HEK293T (cell line): ENCODE measurements at regions of chr6 and their contacts with region 1.

Region 1: DNA sequence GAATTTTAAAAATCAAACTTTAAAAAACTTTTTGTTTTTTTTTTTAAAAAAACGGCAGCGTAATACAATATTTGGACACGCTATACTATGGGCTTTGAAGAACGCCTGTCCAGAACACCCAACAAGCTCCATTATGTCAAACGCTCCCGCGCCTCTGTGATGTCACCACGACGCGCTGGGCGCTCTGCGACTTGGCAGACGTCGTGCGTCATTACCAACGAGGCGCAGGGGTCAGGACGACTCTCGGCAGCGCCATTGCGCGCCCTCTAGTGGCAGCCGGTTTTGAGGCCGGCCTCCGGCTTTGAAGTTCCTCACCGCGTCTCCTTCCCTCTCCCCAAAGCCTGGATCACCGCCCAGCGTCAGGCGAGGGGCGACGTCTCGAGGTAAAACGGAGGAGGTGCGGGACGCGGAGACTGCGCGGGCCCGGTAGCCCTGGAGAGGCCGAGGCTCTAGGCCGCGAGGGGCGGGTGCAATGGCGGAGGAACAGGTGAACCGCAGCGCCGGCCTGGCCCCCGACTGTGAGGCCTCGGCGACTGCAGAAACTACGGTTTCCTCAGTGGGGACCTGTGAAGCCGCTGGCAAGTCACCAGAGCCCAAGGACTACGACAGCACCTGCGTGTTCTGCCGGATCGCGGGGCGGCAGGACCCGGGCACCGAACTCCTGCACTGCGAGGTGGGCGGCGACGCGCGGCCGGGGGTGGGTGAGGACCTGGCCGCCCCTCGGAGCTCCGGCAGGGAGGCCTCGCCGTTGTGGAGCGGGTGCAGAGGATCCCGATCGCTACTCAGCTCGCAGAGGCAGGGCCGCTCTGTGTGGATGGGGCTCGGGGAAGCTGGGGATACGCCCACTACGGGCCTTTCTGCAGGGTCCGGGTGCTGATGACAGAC is at the start of gene HINT3:
- DNase-seq: peak; percentile 97

Region 2: GRCh38 chr6:125779924-125780539 is 176.7 kb before region 1 on chr6:
- CTCF ChIA-PET with region 1: interaction called, 15 read pairs
- POLR2A ChIA-PET with region 1: interaction called, 31 read pairs
- DNase-seq: peak; percentile 92

Region 3: DNA sequence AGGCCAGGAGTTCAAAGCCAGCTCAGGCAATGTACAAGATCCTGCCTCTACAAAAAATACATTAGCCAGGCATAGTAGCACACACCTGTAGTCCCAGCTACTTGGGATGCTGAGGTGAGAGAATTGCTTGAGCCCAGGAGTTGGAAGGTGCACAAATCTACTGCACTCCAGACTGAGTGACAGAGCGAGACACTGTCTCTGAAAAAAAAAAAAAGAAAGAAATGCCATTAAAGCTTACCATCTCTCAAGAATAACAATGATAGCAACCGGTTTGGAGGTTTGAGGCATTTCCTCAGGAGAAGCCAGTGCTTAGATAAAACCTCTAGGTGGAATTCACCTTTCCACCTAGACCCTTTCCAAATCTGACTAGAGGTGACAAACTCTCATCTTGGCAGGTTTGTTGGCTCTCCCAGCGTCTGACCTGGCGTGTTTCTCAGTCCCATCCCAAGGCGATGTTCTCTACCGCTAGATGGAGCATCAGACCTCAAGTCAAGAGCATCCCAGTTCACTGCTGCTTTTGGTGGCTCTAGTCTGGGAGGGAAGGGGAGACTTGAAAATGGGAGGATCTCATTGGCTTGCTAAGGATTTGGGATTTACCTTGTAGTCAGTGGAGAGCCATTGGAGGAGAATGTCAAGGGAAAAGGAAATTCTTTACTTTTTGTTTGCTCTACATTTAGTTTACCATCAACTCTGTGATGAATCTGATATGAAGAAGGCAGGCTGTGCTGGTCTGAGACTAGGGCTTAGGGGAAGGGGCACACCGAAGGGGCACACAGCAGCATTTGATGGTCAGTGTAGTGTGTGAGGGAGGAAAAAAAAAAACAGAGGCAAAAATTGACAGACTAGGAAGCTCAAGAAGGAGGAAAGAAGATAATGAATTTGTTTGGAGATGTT is 98.1 kb before region 1 on chr6:
- CTCF ChIA-PET with region 1: interaction called, 15 read pairs
- POLR2A ChIA-PET with region 1: interaction called, 8 read pairs
- DNase-seq: peak; percentile 86

Region 4: DNA sequence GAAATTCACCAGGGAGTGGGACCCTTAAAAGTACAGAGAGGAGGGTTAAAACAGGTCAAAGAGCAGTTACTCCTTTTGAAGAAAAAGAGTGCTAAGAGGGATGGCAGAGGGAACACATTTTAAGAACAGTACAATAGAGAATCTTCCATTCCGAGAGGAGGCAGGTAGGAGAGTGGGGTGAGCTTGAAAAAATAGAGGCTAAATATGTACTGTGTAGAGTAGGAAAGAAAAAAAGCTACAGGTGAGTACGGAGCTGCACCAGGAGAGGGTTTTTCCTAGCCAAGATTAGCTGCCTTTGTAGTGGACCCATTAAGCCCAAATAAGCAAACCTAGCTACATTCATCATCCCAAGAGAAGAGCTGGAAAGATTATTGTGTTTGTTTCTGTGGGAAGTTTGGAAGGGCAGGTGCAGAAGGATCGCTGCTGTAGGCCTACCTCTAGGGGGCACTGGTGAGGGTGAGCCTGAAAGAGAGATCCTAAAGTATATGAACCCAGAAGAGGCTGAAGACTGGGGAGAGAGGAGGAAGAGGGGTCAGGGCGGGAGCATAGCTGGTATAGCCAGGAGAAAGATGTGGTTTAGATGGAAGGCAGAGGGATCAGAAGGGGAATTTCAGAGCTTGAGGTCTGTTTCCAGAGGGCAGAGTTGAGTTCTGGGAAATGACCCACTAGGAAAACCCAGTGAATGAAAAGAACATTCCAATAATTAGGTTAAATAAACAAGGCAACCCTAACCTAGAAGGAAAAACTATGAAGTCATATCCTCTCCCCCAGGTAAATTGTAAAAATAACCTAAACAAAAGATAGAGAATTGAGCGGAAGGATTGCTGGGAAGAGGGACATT is 50.4 kb before region 1 on chr6:
- CTCF ChIA-PET with region 1: interaction called, 29 read pairs
- POLR2A ChIA-PET with region 1: interaction called, 13 read pairs
- DNase-seq: peak; percentile 73

Region 5: DNA sequence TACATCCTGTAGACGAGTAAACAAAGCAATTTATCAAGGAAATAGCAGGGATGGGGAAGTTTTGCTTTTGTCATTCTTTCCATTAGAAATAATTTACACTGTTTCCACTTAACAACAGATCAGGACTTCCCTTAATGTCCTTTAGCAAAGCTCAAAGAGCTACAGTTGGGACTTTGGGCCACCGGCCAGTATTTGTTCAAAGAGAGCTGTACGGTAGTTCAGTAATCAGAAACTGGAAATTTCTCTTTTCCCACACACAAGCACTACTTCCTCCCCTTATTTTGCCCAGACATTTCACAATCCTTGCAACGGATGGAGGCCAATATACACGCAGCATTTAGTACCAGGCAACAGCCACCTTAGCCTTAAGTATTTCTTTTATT is 12.3 kb before region 1 on chr6:
- CTCF ChIA-PET with region 1: interaction called, 42 read pairs
- POLR2A ChIA-PET with region 1: interaction called, 36 read pairs
- DNase-seq: no peak

Region 6: DNA sequence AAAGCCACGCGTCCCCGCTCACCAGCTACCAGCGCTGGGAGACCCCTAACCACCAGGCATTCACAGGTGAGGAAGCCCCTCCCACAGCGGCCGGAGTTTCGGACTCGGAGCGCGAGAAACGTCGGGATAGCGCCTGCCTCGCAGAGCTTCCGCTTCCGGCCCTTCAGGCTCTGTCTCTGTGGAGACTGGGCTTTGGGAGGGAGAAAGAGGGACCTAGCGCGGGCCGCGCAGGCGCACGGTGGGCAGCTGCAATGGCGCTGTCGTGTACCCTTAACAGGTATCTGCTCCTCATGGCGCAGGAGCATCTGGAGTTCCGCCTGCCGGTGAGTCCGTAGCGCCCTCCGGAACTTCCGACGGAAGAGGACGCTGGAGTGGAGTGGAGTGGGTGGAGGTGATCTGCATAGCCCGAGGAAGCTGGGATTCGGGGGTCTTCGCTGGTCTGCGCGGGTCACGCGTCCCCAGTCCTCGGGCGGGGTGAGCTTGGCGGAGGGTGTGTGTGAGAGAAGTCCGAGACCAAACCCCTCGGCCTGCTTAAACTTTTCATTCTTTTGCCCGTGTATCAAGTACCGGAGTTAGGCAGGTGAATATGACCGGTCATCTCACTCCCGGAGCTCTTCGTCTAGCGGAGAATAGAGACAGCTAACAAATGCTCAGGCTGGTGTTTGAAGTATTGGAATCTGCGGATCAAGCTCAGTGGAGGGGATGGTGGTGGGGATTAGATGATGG is 29.7 kb after region 1 on chr6 and contains the start of gene TRMT11:
- CTCF ChIA-PET with region 1: interaction called, 11 read pairs
- POLR2A ChIA-PET with region 1: interaction called, 27 read pairs
- DNase-seq: peak; percentile 98